Head of caudate nucleus (tissue), 42 donors: ENCODE measurements at regions of chr9 and their contacts with region 1.

Region 1: DNA sequence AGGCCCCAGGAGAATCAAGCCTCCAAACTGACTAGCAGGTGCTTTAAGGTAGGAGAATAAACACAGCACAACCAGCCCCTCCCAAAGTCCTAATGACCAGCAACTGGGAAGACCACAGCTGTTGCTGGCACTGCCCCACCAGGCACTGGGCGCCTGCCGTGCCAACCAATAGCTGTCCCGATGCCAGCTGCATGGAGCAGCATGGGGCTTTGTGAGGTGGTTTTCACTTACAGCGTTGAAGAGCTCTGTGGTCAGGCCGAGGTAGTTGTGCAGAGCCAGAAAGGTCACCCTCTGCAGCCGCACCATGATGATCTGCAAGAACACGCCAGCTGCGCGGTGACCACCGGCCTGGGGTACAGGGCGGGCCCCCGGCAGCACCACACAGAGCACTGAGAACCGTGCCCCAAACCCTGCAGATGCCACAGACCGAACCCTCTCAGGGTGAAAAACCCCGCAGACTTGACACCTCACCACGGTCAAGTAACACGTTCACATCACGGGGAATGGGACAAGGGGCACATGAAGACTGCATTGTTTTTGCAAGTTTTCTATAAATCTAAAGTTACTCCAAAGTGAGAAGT is 28.7 kb downstream of the PNPLA7 start:
- DNase-seq: peak in 1 of 42 donors; percentile 36

Region 2: GRCh38 chr9:137295238-137295811 is 226.2 kb before region 1 on chr9:
- intact Hi-C with region 1: loop called (anchors 10 kb)
- DNase-seq: peak in 5 of 42 donors; percentile 31 to 63 (median 59)